Dorsolateral prefrontal cortex (tissue), 120 donors: ENCODE measurements at regions of chr18 and their contacts with region 1.

Region 1: GRCh38 chr18:3012964-3013804 is at the start of gene LPIN2:
- DNase-seq: peak; percentile 91 to 97 (median 95)
- H3K4me3 ChIP-seq: peak within 1 kb of the TSS; percentile 54 to 94 (median 81)
- H3K27ac ChIP-seq: peak within 1 kb of the TSS; percentile 29 to 99 (median 92)
- H3K27me3 ChIP-seq: no peaks in the 10 kb centered on the region
- CTCF ChIP-seq: peak in 4 of 56 donors; percentile 3 to 28 (median 13)
- total RNA-seq, gene LPIN2: 37.1 to 95.3 (median 57.4) TPM

Region 2: DNA sequence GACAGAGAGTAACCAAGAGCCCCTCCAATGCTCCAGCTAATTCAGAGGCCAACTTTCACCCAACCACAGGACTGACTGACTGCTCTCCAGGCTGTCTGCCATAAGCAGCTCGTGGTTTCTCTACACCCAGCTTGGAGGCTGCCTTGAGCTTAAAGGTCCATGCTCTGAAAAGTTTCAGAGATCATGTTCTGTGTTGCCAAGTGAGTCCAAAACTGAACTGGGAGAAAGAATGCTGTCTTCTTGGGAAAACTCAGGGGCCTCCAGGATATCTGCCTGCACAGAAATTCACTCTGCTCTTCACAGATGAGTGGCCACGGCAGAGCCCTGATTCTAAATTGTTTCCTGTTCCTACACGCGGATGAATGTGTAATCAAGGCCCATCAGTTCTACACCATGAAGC is 51.4 kb before region 1 on chr18:
- intact Hi-C with region 1: loop called in 1 of 2 experiments (anchors 10 kb)
- DNase-seq: peak in 1 of 10 donors; percentile 21
- H3K4me3 ChIP-seq: peak overlapping the region in 1 of 59 donors; percentile 5
- H3K27ac ChIP-seq: peak overlapping the region in 41 of 59 donors; percentile 2 to 85 (median 59)
- H3K27me3 ChIP-seq: no peaks in the 10 kb centered on the region
- CTCF ChIP-seq: no peak

Region 3: DNA sequence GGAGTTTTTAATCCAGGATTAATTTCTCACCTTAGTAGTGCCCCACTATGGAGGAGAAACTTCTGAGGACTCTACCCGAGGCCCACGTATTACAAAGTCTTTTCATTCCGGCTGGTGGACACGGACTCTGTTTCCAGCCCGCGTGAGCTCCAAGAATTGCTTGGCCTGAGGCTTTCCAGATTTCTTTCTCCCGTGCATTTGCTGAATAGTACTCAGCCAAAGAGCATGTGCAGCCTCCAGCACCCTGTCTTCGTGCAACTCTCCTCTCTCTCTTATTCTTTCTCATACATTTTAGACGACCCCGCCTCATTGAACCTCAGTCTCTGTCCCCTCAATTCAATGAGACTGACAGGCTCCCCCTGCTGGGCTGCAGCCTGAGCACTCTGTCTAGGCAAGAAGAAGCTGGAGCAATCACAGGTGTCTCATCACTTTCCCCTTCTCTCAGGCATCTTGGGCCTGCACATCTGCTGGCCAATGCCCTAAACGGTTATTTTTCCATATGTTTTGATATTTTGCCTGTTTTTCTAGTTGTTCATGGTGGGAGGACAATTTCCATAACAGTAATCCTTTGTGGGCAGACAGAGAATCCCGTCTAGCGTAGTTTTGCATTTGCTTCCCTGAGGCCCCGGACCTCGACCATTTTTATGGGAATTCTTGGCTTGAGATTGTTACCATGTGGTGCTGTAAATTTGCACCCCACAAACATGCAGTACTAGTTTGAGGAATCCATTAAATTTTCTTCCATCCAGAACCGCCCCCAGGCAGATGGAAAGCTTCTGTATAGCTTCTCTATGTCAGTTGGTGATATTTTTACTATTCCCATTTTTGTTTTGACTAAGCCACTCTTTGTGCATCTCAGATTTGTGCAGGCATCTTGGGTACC is 49.9 kb after region 1 on chr18:
- intact Hi-C with region 1: loop called in 1 of 2 experiments (anchors 5 kb)
- DNase-seq: peak; percentile 39 to 74 (median 68)
- H3K4me3 ChIP-seq: peak overlapping the region in 42 of 59 donors; percentile 1 to 55 (median 35)
- H3K27ac ChIP-seq: peak overlapping the region in 6 of 59 donors; percentile 0 to 39 (median 15)
- H3K27me3 ChIP-seq: no peaks in the 10 kb centered on the region
- CTCF ChIP-seq: peak in 55 of 56 donors; percentile 42 to 85 (median 76)

Region 4: GRCh38 chr18:3135536-3135935 is 122.4 kb after region 1 on chr18:
- intact Hi-C with region 1: loop called in 1 of 2 experiments (anchors 10 kb)
- DNase-seq: peak in 3 of 10 donors; percentile 8 to 46 (median 28)
- H3K4me3 ChIP-seq: peak overlapping the region in 10 of 59 donors; percentile 1 to 37 (median 16)
- H3K27ac ChIP-seq: peak overlapping the region in 31 of 59 donors; percentile 1 to 78 (median 42)
- H3K27me3 ChIP-seq: no peaks in the 10 kb centered on the region
- CTCF ChIP-seq: no peak

Region 5: DNA sequence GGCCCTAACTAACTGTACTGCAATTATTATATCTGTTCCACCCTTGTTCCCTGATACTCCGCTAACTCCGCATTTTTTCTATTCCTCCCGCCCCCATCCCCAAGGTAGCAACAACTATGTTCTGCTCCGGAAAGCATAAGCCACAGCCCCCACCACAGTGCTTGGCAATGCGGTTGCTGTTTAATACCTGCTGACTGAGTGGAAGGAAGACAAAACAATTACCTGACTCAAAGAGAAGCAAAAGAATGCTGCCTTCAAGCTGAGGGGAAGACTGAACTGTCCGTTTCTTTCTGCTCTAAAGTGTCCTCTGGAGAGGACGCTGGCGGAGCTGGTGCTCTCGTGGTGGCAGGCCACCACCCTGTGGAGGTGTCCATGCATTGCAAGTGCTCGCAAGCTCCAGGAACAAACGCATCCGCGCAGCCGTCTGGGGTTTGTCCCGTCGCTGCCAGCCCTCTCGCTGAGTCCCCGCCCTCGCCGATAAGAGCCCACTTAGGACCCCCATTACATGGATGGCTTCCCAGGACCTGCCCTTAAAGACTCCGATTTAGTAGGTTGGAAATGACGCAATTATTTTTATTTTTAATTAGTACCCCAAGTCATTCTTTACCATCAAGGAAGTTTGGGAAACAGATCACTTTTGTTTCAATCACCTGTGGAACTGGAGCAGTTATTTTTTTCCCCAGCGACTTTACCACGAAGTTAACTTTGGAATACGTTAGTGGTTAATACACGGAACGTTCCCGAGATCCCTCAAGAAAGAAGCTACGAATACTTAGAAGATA is 232.9 kb after region 1 on chr18:
- intact Hi-C with region 1: loop called in 1 of 2 experiments (anchors 2 kb)
- DNase-seq: peak; percentile 69 to 89 (median 86)
- H3K4me3 ChIP-seq: peak overlapping the region; percentile 22 to 100 (median 94)
- H3K27ac ChIP-seq: peak overlapping the region; percentile 49 to 99 (median 97)
- H3K27me3 ChIP-seq: no peaks in the 10 kb centered on the region
- CTCF ChIP-seq: peak; percentile 79 to 98 (median 94)